Activated CD4-positive, alpha-beta T cell treated with anti-CD3 and anti-CD28 coated beads, Interleukin-2, amount 10 ng/mL, durations not matched to agents 7 days and 5 days (primary cell): ENCODE measurements at regions of chr7 and their contacts with region 1.

Region 1: GRCh38 chr7:139753081-139753692 is 24.6 kb downstream of the HIPK2 start:
- DNase-seq: no peak
- H3K4me3 Mint-ChIP-seq: no peak overlapping the region
- H3K27ac Mint-ChIP-seq: no peak overlapping the region
- H3K4me1 Mint-ChIP-seq: peaks cover 25% of the 10 kb centered on the region
- H3K27me3 Mint-ChIP-seq: no peaks in the 10 kb centered on the region

Region 2: GRCh38 chr7:139482662-139483469 is 270.3 kb before region 1 on chr7:
- CTCF ChIA-PET with region 1: no interaction called
- POLR2A ChIA-PET with region 1: no interaction called
- DNase-seq: peak; percentile 12
- H3K4me3 Mint-ChIP-seq: peak overlapping the region; percentile 51
- H3K27ac Mint-ChIP-seq: no peak overlapping the region
- H3K4me1 Mint-ChIP-seq: peaks cover 6% of the 10 kb centered on the region
- H3K27me3 Mint-ChIP-seq: peaks cover 50% of the 10 kb centered on the region

Region 3: GRCh38 chr7:139588632-139589031 is 164.6 kb before region 1 on chr7:
- CTCF ChIA-PET with region 1: no interaction called
- POLR2A ChIA-PET with region 1: no interaction called
- DNase-seq: no peak
- H3K4me3 Mint-ChIP-seq: no peak overlapping the region
- H3K27ac Mint-ChIP-seq: no peak overlapping the region
- H3K4me1 Mint-ChIP-seq: peaks cover 7% of the 10 kb centered on the region
- H3K27me3 Mint-ChIP-seq: no peaks in the 10 kb centered on the region

Region 4: DNA sequence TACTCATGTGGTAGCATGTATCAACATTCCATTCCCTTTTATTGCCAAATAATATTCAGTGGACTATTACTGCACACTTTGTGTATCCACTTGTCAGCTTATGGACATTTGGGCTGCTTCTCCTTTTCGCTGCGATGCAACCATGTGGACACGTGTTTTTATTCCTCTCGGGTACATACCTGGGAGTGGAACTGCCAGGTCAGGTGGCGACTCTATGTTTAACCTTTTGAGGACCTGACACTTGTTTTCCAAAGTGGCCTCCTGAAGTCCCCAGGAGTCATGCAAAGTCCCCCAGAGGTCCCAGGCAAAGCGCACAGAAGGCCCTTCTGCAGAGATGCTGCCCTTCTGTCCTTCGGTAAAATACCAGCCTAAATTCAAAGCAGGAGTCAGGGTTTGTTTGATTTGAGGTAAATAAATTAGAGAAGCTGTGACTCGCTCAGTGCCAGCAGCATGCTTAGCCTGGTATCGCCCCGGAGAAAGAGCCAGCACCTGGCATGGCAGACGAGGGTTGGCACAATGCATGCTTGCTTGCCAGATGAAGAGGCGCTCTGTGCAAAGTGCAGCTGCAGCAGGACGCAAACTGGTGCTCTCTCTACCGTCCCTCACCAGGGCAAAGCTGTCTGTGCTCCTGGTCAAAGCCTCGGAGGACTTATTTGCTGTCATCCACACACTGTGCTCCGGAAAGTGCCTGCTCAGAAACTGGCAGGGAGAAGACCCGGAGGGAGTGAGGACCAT is 13.2 kb before region 1 on chr7:
- CTCF ChIA-PET with region 1: interaction called, 19 read pairs
- POLR2A ChIA-PET with region 1: no interaction called
- DNase-seq: no peak
- H3K4me3 Mint-ChIP-seq: no peak overlapping the region
- H3K27ac Mint-ChIP-seq: no peak overlapping the region
- H3K4me1 Mint-ChIP-seq: peaks cover 48% of the 10 kb centered on the region
- H3K27me3 Mint-ChIP-seq: no peaks in the 10 kb centered on the region